Activated T-helper 1 cell treated with anti-CD3 and anti-CD28 coated beads, Interleukin-12 subunit alpha, Interleukin-12 subunit beta, Interleukin-2, Interleukin-4 antibody, amounts not matched to agents 30 ng/mL and 10 ng/mL and 1 ng/mL, durations not matched to agents 14 hours and 24 hours and 36 hours (primary cell): ENCODE measurements at regions of chr19 and their contacts with region 1.

Region 1: GRCh38 chr19:1269065-1269477 is at the start of gene CIRBP:
- DNase-seq: peak; percentile 99
- H3K4me3 Mint-ChIP-seq: peak within 1 kb of the TSS; percentile 91
- H3K27ac Mint-ChIP-seq: peak within 1 kb of the TSS; percentile 91
- H3K4me1 Mint-ChIP-seq: peaks cover 43% of the 10 kb centered on the region
- H3K27me3 Mint-ChIP-seq: no peaks in the 10 kb centered on the region
- total RNA-seq, gene CIRBP: 245 and 256 TPM in 2 replicates

Region 2: DNA sequence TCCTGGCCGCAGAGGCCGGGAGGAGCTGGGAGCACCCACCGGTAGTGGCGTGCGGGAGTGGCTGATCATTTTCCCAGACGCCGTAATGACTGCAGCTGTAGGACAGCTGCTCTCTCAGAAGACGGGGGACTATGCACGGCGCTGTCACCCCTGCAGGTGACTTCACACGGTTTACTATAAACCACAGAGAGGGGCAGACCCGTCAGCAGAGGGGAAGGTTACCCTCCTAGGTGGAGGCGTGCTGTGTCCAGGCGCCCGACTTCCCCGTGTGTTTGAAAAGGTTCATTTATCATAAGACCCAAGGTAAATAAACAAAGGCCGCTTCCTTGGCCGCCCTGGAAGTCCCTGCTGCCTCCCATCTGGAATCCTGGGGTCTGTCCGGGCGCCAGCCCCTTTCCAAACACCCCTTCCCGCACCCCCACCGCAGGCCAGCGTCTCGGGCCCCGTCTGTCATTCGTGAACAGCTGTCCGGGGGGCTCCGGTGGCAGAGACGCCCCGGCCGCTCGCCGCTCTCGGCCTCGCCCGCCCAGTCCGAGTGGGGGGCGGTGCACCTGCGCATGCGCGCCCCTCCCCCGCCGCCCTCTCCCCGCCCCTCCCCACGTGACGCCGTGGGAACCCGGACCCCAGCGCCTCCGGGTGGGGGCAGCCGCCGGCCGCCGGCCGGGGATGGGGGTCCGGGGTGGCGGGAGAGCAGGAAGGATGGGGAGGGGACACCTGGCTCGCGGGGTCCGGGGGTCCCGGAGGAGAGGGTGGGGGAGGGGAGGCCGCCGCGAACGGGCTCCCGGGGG is 809.2 kb before region 1 on chr19:
- intact Hi-C with region 1: no loop called
- DNase-seq: no peak
- H3K4me3 Mint-ChIP-seq: peak overlapping the region; percentile 47
- H3K27ac Mint-ChIP-seq: no peak overlapping the region
- H3K4me1 Mint-ChIP-seq: no peaks in the 10 kb centered on the region
- H3K27me3 Mint-ChIP-seq: peaks cover 16% of the 10 kb centered on the region

Region 3: DNA sequence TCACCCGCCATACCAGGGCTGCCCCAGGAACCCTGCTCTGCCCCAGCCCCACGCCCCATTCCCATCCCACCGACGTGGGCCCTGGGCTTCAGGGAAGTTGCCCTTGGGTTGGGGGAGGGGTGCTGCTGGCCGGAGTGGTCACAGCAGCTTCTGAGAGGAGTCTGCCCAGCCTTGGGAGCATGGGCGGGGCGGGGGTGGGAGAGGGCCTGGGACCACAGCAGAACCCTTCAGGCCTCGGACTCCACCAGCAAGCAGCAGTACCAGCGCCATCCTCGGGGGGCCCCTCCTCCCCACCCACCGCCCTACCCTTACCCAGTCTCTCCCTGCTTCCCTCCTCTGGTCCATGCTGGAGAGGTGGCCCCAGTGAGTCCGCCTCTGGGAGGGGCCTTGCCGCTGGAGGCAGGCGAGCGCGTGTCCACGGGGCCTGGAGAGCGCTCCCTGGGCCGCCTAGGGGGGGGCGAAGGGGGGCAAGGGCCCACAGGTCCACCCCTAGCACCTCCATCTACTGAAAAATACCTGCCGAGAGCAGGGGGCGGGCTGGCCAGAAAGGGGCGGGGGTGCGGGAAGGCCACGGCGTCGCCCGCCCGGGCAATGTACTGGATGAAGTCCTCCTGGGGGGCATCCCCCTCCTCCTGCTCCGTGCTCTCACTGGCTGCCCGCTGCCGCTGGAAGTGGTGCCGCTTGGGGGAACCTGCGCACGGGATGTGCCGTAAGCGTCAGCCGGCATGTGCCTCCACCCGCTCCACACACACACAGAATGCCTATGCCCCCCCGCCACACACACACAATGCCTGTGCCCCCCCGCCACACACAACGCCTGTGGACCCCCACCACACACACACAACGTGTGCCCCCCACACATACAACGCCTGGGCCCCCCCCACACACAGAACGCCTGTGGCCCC is 38.2 kb before region 1 on chr19:
- intact Hi-C with region 1: no loop called
- DNase-seq: no peak
- H3K4me3 Mint-ChIP-seq: no peak overlapping the region
- H3K27ac Mint-ChIP-seq: no peak overlapping the region
- H3K4me1 Mint-ChIP-seq: no peaks in the 10 kb centered on the region
- H3K27me3 Mint-ChIP-seq: peaks cover 2% of the 10 kb centered on the region

Region 4: GRCh38 chr19:1241417-1242095 is 27.5 kb before region 1 on chr19 and contains the start of gene ATP5F1D:
- intact Hi-C with region 1: loop called (anchors 1 kb)
- DNase-seq: peak; percentile 91
- H3K4me3 Mint-ChIP-seq: peak within 1 kb of the TSS; percentile 91
- H3K27ac Mint-ChIP-seq: peak within 1 kb of the TSS; percentile 84
- H3K4me1 Mint-ChIP-seq: peaks cover 27% of the 10 kb centered on the region
- H3K27me3 Mint-ChIP-seq: peaks cover 16% of the 10 kb centered on the region
- total RNA-seq, gene ATP5F1D: 234 and 239 TPM in 2 replicates

Region 5: DNA sequence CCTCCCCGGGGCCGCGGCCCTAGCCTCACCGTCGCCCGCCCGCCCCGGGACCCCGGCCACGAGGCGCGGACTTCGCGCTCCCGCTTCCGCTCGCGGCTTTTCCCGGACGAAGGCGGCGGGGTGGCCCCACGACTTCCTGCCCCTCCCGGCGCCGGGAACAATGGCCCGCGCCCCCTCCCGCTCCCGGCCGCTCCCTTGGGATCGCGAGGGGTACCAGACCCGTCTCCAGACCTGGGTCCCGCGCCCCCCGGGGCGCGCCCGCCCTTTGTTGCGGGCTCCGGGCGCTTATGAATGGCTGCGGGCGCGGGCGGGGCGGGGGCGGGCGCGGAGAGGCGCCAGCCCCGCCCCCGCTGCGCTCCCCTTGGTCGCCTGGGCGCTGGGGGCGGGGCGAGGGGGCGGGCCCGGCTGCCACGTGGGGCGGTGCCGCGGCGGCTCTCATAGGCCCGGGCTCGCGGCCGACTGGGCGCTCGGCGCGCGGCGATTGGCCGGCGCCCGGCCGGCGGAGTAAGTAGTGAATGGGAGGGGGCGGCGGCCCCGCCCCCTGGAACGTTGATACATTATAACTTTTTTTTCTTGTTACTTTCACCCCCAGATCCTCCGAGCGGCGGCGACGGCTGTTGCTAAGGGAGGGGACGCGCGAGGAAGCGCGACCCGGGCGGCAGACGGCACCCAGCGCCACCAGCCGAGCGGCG is 19.6 kb before region 1 on chr19:
- intact Hi-C with region 1: loop called (anchors 1 kb)
- DNase-seq: peak; percentile 91
- H3K4me3 Mint-ChIP-seq: peak overlapping the region; percentile 82
- H3K27ac Mint-ChIP-seq: peak overlapping the region; percentile 86
- H3K4me1 Mint-ChIP-seq: peaks cover 5% of the 10 kb centered on the region
- H3K27me3 Mint-ChIP-seq: no peaks in the 10 kb centered on the region

Region 6: GRCh38 chr19:1507763-1508509 is 238.9 kb after region 1 on chr19:
- intact Hi-C with region 1: no loop called
- DNase-seq: peak; percentile 82
- H3K4me3 Mint-ChIP-seq: peak overlapping the region; percentile 80
- H3K27ac Mint-ChIP-seq: peak overlapping the region; percentile 77
- H3K4me1 Mint-ChIP-seq: peaks cover 6% of the 10 kb centered on the region
- H3K27me3 Mint-ChIP-seq: peaks cover 22% of the 10 kb centered on the region

Region 7: DNA sequence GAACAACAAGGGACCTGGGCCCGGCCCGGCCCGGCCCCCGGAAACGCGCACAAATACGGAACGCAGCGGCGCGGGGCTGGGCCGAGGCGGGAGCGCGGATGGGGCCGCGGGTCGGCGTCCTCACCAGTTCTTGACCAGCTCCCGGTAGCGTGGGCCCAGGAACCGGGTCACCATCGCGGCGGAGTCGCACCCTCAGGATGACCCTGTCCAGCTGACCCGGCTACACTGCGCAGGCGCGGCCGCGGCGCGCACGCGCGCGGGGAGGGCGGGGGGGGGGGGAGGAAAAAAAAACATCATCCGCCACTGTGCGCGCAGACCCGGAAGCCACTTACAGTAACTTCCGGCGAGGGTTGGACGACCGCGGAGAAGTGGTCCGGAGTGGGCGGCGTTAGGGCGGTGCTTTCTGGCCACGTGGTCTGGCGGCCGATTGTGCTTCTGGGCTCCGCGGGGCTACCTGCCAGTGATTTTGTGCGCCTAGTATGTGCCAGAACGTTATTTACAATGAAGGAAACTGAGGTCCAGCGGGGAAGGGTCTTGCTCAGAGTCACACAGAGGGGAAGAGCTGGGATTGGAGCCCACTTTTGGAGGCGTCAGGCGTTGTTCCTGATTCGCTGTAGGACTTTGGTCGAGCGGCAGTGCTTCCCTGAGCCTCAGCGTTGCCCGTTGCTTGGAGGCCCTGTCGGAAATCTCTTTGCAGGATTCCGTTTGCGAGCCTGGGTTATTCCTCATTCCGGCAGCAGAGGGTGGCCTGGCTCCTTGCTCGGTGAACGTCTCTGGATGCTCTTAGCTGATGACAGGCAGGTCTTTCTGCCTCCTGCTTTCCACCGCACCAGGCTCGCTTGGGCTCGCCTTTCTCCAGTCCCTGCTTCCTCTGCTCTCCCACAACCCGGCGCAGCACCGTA is 336.4 kb after region 1 on chr19 and contains the start of gene UQCR11:
- intact Hi-C with region 1: no loop called
- DNase-seq: peak; percentile 88
- H3K4me3 Mint-ChIP-seq: peak within 1 kb of the TSS; percentile 98
- H3K27ac Mint-ChIP-seq: peak within 1 kb of the TSS; percentile 100
- H3K4me1 Mint-ChIP-seq: peaks cover 27% of the 10 kb centered on the region
- H3K27me3 Mint-ChIP-seq: no peaks in the 10 kb centered on the region
- total RNA-seq, gene UQCR11: 171 and 176 TPM in 2 replicates